Psoas muscle (tissue), 8 donors: ENCODE measurements at regions of chr16 and their contacts with region 1.

Region 1: DNA sequence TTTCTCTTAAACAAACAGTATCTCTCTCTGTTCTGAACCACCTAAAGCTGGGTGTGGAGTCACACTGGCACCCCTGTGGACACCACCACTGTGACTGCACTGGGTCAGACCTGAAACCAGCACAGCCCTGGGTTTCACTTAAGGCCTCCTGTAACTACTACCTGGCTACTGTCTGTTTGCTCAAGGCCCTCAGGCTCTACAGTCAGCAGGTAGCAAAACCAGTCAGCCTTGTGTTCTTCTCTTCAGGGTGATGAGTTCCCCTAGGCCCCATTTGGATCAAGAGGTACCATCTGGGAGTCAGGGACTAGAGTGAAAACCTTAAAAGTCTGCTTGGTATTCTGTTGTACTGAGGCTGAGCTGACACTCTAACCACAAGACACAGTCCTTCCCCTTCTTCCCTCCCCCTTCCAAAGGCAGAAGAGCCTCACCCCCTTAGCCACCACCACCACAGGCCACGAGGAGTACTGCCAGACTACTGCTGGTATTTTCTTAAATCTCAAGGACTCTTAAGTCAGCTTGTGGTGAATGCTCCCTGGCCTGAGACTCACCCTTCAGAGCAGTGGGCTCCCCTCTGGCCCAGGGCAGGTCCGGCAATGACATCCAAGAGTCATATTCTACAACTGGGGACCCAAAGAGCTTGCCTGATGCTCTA is 153.2 kb upstream of the MON1B start:
- DNase-seq: no peak
- ATAC-seq: no peak
- H3K4me3 ChIP-seq: no peak overlapping the region
- H3K27ac ChIP-seq: no peak overlapping the region
- H3K4me1 ChIP-seq: no peaks in the 10 kb centered on the region
- H3K27me3 ChIP-seq: no peaks in the 10 kb centered on the region
- CTCF ChIP-seq: no peak

Region 2: GRCh38 chr16:76882077-76882476 is 155.7 kb before region 1 on chr16:
- intact Hi-C with region 1: no loop called
- DNase-seq: no peak
- ATAC-seq: no peak
- H3K4me3 ChIP-seq: no peak overlapping the region
- H3K27ac ChIP-seq: no peak overlapping the region
- H3K4me1 ChIP-seq: no peaks in the 10 kb centered on the region
- H3K27me3 ChIP-seq: no peaks in the 10 kb centered on the region
- CTCF ChIP-seq: no peak

Region 3: DNA sequence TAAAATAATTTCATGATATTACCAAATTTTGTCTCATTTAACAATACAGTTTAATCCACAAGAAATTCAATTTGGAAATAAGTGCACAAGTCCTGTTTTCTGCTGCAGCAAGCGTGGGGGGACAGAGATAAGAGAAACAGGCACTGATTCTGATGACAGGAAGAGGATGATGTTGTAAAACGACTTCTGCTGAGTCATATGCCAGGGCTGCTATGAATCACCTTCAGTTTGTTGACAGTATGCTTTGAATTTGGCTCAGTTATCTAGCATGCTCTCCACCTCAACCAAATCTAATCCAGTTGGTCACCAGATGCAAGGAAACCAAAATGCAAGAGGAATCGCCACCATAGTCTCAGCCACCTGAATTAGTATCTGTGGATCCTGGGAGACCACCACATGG is 90.9 kb before region 1 on chr16:
- intact Hi-C with region 1: loop called in 1 of 2 experiments (anchors 2 kb)
- DNase-seq: no peak
- ATAC-seq: peak; percentile 76 to 96 (median 84)
- H3K4me3 ChIP-seq: no peak overlapping the region
- H3K27ac ChIP-seq: peak overlapping the region; percentile 76
- H3K4me1 ChIP-seq: peaks cover 3% of the 10 kb centered on the region
- H3K27me3 ChIP-seq: no peaks in the 10 kb centered on the region
- CTCF ChIP-seq: no peak

Region 4: GRCh38 chr16:77014441-77014840 is 23.4 kb before region 1 on chr16:
- intact Hi-C with region 1: no loop called
- DNase-seq: no peak
- ATAC-seq: no peak
- H3K4me3 ChIP-seq: no peak overlapping the region
- H3K27ac ChIP-seq: no peak overlapping the region
- H3K4me1 ChIP-seq: no peaks in the 10 kb centered on the region
- H3K27me3 ChIP-seq: no peaks in the 10 kb centered on the region
- CTCF ChIP-seq: no peak

Region 5: DNA sequence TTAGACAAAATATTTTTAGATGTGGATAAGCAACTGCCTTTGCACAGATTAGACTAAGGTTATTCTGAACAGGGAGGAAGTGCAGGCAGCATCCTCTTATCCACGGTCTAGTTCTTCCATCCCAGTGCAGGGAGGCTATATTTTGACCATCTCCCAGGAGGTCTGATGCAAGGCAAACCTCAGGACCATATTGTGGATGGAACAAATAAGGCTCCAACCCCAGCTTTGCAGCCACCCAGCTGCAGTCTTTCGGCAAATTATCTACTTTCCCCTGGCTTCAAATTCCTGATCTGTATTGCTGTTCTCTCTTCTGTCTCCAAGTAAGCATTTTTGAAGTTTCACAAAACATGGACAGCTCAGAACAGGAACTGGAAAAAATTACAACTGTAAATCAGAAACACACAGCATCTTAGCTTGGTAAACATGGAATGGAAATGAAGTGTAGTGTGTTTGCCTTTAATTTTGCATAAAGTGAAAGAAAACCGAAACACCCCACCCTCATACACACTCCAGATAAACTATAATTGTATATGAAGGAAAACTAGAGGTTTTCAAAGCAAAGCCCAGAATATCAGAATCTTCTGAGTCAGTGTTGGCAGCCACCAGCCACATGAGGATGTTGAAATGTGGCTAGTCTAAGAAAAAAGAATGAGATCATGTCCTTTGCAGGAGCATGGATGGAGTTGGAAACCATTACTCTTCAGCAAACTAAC is 119.7 kb after region 1 on chr16:
- intact Hi-C with region 1: no loop called
- DNase-seq: no peak
- ATAC-seq: no peak
- H3K4me3 ChIP-seq: no peak overlapping the region
- H3K27ac ChIP-seq: no peak overlapping the region
- H3K4me1 ChIP-seq: no peaks in the 10 kb centered on the region
- H3K27me3 ChIP-seq: peaks cover 0 to 2% (median 0%) of the 10 kb centered on the region in 3 donors
- CTCF ChIP-seq: no peak